HCT116 (cell line): ENCODE measurements at regions of chr1 and their contacts with region 1.

Region 1: DNA sequence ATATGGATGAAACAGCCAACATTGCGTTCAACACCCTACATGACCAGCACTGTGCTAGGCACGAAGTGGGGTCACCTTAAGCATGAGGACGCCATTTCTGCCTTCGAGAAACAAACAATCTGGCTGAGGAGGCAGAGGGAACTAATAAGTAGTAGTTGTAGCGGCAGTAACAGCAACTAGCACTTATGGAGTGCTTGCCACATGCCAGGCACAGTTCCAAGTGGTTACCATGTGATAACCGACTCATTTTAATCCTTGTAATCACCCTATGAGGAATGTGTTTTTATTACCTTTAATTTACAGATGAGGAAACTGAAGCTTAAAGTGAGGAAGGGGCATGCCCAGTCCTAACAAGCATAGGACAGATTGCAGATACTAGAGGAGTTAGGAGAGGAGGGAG is 33.7 kb downstream of the KCND3 start:
- DNase-seq: no peak
- ATAC-seq: no peak
- H3K4me3 ChIP-seq: no peak overlapping the region
- H3K27ac ChIP-seq: no peak overlapping the region
- H3K4me1 ChIP-seq: no peaks in the 10 kb centered on the region
- H3K27me3 ChIP-seq: peaks cover 62% of the 10 kb centered on the region
- CTCF ChIP-seq: no peak
- POLR2A ChIP-seq: no peak
- RAD21 ChIP-seq: no peak

Region 2: GRCh38 chr1:111920221-111921024 is 35.3 kb before region 1 on chr1:
- CTCF ChIA-PET with region 1: no interaction called
- POLR2A ChIA-PET with region 1: no interaction called
- RAD21 ChIA-PET with region 1: no interaction called
- intact Hi-C with region 1: no loop called
- DNase-seq: no peak
- ATAC-seq: no peak
- H3K4me3 ChIP-seq: no peak overlapping the region
- H3K27ac ChIP-seq: no peak overlapping the region
- H3K4me1 ChIP-seq: no peaks in the 10 kb centered on the region; a peak in 1 of 4 replicates
- H3K27me3 ChIP-seq: peaks cover 36% of the 10 kb centered on the region
- CTCF ChIP-seq: no peak
- POLR2A ChIP-seq: no peak
- RAD21 ChIP-seq: no peak

Region 3: DNA sequence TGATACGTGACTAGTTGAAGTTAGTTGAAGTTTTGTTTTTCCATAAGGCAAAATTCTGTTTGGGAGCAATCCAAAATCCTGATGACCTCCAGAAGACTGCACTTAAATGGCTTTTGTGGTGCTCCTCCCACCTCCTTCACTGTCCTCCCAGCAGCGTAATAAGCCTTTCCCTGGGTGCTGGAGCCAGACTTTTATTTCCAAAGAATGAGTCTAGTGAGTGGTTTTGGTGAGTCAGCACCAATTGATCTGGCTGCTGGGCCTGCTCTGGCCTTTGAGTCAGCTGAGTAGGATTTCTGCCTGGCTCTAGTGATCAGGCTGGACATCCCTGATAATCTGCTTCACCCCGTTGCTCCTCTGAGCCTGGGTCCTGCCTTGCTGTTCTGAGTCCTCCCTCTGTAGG is 55.5 kb after region 1 on chr1:
- CTCF ChIA-PET with region 1: no interaction called
- POLR2A ChIA-PET with region 1: no interaction called
- RAD21 ChIA-PET with region 1: no interaction called
- intact Hi-C with region 1: loop called (anchors 2 kb)
- DNase-seq: no peak
- ATAC-seq: no peak
- H3K4me3 ChIP-seq: no peak overlapping the region
- H3K27ac ChIP-seq: no peak overlapping the region
- H3K4me1 ChIP-seq: no peaks in the 10 kb centered on the region
- H3K27me3 ChIP-seq: peaks cover 74% of the 10 kb centered on the region
- CTCF ChIP-seq: no peak
- POLR2A ChIP-seq: no peak
- RAD21 ChIP-seq: no peak

Region 4: GRCh38 chr1:112818990-112819689 is 863.4 kb after region 1 on chr1:
- CTCF ChIA-PET with region 1: no interaction called
- POLR2A ChIA-PET with region 1: no interaction called
- RAD21 ChIA-PET with region 1: no interaction called
- intact Hi-C with region 1: no loop called
- DNase-seq: no peak
- ATAC-seq: no peak
- H3K4me3 ChIP-seq: no peak overlapping the region
- H3K27ac ChIP-seq: no peak overlapping the region
- H3K4me1 ChIP-seq: no peaks in the 10 kb centered on the region
- H3K27me3 ChIP-seq: no peaks in the 10 kb centered on the region
- CTCF ChIP-seq: no peak
- POLR2A ChIP-seq: no peak
- RAD21 ChIP-seq: no peak